Ovary (tissue), 10 donors: ENCODE measurements at regions of chr17 and their contacts with region 1.

Region 1: DNA sequence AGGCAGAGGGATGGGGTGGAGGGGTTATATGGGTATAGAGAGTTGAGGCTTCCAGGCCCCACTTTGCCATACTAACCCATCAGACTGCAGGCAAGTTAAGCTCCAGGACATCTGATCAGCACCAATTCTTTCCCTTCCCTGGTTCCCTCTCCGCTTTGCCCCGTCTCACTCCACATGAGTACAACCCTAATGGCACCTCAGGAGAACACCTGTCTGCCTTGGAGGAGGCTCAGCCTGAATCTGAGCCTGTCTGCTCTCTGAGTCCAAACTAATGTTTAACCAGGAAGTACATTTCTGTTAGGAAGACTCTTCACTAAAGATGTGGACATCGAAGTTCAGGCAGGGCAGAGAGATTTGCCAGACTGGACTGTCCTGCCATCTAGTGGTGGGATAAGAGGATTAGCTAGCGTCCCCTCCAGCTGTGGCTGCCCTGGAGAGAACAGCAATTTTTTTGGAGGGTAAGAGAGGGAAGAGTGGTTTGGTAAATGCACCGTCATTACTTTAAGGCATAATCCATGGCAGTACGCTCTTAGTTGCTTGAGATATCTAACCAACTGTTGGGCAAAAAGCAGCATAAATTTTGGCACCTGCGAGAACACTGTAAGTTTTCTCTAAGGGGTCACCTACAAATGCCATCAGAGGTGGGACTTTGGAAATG is 29.2 kb upstream of the LRRC75A start:
- DNase-seq: peak; percentile 68 to 85 (median 70)
- H3K4me3 ChIP-seq: no peak overlapping the region
- H3K27ac ChIP-seq: no peak overlapping the region
- H3K4me1 ChIP-seq: peaks cover 2% of the 10 kb centered on the region
- H3K27me3 ChIP-seq: no peaks in the 10 kb centered on the region
- CTCF ChIP-seq: peak; percentile 80 to 89 (median 88)
- EP300 ChIP-seq: no peak
- POLR2A ChIP-seq: no peak

Region 2: DNA sequence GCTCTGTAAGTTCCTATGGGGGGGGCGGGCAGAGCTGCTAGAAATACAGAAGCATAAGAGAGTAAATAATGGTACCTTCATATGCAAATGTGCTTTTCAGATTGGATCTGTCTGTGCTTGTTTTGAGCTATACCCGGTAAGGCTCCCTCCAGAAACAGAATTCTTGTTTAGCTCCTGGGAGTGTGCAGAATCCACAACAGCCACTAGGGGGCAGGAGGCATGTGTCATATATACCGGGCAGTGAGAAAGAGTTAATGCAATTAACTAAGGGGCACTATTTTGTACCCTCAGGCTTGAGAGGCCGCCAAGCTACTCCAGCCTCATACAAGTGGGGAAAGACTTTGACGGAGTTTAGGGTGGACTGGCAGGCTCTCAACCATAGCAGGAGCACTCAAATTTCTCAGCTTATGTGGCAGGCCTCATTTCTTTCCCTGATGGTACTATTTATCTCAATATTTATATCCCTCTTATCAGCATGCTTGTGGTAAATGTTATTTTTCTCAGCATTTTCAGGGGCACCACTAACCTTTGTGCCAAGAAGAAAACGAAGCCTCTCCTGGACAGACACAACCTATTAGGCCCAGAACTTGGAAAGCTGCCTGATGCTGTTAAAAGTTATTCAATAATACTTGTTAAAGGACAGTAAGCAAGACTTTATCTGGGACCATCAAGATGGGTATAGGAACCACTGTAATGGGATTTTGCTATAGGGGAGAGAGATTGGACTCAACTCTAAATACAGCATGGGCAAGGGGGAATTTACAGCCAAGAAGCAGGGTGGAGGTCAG is 157.3 kb before region 1 on chr17:
- intact Hi-C with region 1: loop called (anchors 5 to 10 kb)
- DNase-seq: peak; percentile 51 to 78 (median 74)
- H3K4me3 ChIP-seq: no peak overlapping the region
- H3K27ac ChIP-seq: no peak overlapping the region
- H3K4me1 ChIP-seq: no peaks in the 10 kb centered on the region
- H3K27me3 ChIP-seq: no peaks in the 10 kb centered on the region
- CTCF ChIP-seq: peak; percentile 70 to 80 (median 75)
- EP300 ChIP-seq: no peak
- POLR2A ChIP-seq: no peak

Region 3: GRCh38 chr17:16380640-16381495 is 140.3 kb before region 1 on chr17 and contains the start of gene UBB:
- intact Hi-C with region 1: loop called in 1 of 4 experiments (anchors 10 kb)
- DNase-seq: peak; percentile 88 to 93 (median 91)
- H3K4me3 ChIP-seq: peak within 1 kb of the TSS; percentile 60
- H3K27ac ChIP-seq: peak within 1 kb of the TSS; percentile 87 to 88
- H3K4me1 ChIP-seq: no peaks in the 10 kb centered on the region
- H3K27me3 ChIP-seq: no peaks in the 10 kb centered on the region
- CTCF ChIP-seq: peak in 2 of 3 donors; percentile 8 to 20
- EP300 ChIP-seq: peak; percentile 59
- POLR2A ChIP-seq: peak; percentile 91
- total RNA-seq, gene UBB: 445 to 993 (median 806) TPM

Region 4: DNA sequence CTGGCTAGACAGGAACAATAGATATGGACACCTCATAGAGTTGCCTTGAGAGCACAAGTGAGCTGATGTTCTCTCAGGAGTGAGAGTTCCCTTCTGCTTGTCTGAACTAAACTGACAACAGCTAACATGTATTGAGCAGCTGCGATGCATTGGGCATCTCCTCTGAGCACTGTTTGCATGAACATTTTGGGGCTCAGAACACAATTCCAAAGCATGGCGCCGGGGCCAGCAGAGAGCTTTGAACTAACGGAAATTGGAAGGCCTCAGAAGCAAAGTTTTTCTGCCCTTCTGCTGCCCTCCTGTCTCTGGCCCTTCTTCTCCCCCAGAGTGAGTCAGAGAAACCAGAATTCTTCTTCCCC is 67.7 kb before region 1 on chr17:
- intact Hi-C with region 1: loop called (anchors 2 to 5 kb)
- DNase-seq: no peak
- H3K4me3 ChIP-seq: no peak overlapping the region
- H3K27ac ChIP-seq: no peak overlapping the region
- H3K4me1 ChIP-seq: no peaks in the 10 kb centered on the region
- H3K27me3 ChIP-seq: no peaks in the 10 kb centered on the region
- CTCF ChIP-seq: no peak
- EP300 ChIP-seq: no peak
- POLR2A ChIP-seq: no peak